Ovary (tissue), 10 donors: ENCODE measurements at regions of chr4 and their contacts with region 1.

Region 1: GRCh38 chr4:170794525-170794924 is 704.8 kb upstream of the AADAT start:
- DNase-seq: no peak
- H3K4me3 ChIP-seq: no peak overlapping the region
- H3K27ac ChIP-seq: no peak overlapping the region
- H3K4me1 ChIP-seq: no peaks in the 10 kb centered on the region
- H3K27me3 ChIP-seq: no peaks in the 10 kb centered on the region
- CTCF ChIP-seq: no peak
- EP300 ChIP-seq: no peak
- POLR2A ChIP-seq: no peak

Region 2: GRCh38 chr4:170414961-170415360 is 379.6 kb before region 1 on chr4:
- intact Hi-C with region 1: no loop called
- DNase-seq: no peak
- H3K4me3 ChIP-seq: no peak overlapping the region
- H3K27ac ChIP-seq: no peak overlapping the region
- H3K4me1 ChIP-seq: no peaks in the 10 kb centered on the region
- H3K27me3 ChIP-seq: no peaks in the 10 kb centered on the region
- CTCF ChIP-seq: no peak
- EP300 ChIP-seq: no peak
- POLR2A ChIP-seq: no peak

Region 3: DNA sequence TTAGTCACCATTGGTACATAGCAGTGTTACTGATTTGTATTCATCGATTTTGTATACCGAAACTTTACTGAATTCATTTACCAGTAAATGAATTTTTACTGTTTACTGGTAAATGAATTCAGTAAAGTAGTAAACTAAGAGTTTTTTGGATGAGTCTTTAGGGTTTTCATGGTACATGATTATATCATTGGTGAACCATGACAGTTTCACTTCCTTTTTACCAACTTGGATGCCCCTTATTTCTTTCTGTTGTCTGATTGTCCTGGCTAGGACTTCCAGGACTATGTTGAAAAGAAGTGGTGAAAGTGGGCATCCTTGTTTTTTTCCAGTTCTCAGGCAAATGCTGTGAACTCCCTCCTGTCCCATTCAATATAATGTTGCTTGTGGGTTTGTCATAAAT is 1513.6 kb after region 1 on chr4:
- intact Hi-C with region 1: loop called in 1 of 4 experiments (anchors 10 kb)
- DNase-seq: no peak
- H3K4me3 ChIP-seq: no peak overlapping the region
- H3K27ac ChIP-seq: no peak overlapping the region
- H3K4me1 ChIP-seq: no peaks in the 10 kb centered on the region
- H3K27me3 ChIP-seq: no peaks in the 10 kb centered on the region
- CTCF ChIP-seq: no peak
- EP300 ChIP-seq: no peak
- POLR2A ChIP-seq: no peak